Dendritic cell treated with granulocyte-macrophage colony-stimulating factor and Interleukin-4, amounts not matched to agents 40 ng/mL and 50 ng/mL, for 4 days (primary cell): ENCODE measurements at regions of chr1 and their contacts with region 1.

Region 1: GRCh38 chr1:180415985-180416633 is 86.3 kb downstream of the ACBD6 start:
- H3K4me3 Mint-ChIP-seq: no peak overlapping the region
- H3K27ac Mint-ChIP-seq: no peak overlapping the region
- H3K4me1 Mint-ChIP-seq: peaks cover 5% of the 10 kb centered on the region
- H3K27me3 Mint-ChIP-seq: no peaks in the 10 kb centered on the region

Region 2: GRCh38 chr1:180188091-180188506 is 228.0 kb before region 1 on chr1:
- intact Hi-C with region 1: loop called (anchors 5 kb)
- H3K4me3 Mint-ChIP-seq: no peak overlapping the region
- H3K27ac Mint-ChIP-seq: no peak overlapping the region
- H3K4me1 Mint-ChIP-seq: peaks cover 8% of the 10 kb centered on the region
- H3K27me3 Mint-ChIP-seq: no peaks in the 10 kb centered on the region

Region 3: GRCh38 chr1:180252638-180253536 is 163.2 kb before region 1 on chr1:
- intact Hi-C with region 1: loop called (anchors 1 kb)
- H3K4me3 Mint-ChIP-seq: no peak overlapping the region
- H3K27ac Mint-ChIP-seq: peak overlapping the region; percentile 53
- H3K4me1 Mint-ChIP-seq: peaks cover 28% of the 10 kb centered on the region
- H3K27me3 Mint-ChIP-seq: peaks cover 29% of the 10 kb centered on the region

Region 4: GRCh38 chr1:180451504-180451903 is 35.4 kb after region 1 on chr1:
- intact Hi-C with region 1: no loop called
- H3K4me3 Mint-ChIP-seq: no peak overlapping the region
- H3K27ac Mint-ChIP-seq: no peak overlapping the region
- H3K4me1 Mint-ChIP-seq: no peaks in the 10 kb centered on the region
- H3K27me3 Mint-ChIP-seq: no peaks in the 10 kb centered on the region

Region 5: DNA sequence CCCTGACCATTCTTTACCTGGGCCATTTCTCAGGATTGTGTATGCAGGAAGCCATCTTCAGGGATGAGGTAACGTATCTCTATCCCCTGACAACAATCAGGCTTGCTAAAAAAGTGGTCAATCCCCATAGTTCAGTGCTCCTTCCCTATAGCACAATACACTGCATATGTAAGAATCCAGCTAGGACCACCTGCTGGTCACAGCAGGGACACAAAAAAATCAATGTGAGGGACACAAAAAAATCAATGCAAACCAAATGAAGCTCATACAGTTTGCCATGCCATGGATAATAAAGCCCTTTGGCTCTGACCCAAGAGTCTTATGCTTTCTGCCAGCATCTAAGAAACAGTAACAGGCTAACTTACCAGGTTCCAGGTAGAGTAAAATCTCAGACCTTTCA is 70.0 kb after region 1 on chr1:
- intact Hi-C with region 1: no loop called
- H3K4me3 Mint-ChIP-seq: no peak overlapping the region
- H3K27ac Mint-ChIP-seq: no peak overlapping the region
- H3K4me1 Mint-ChIP-seq: peaks cover 6% of the 10 kb centered on the region
- H3K27me3 Mint-ChIP-seq: no peaks in the 10 kb centered on the region